Endothelial cell of umbilical vein (primary cell): ENCODE measurements at regions of chr2 and their contacts with region 1.

Region 1: GRCh38 chr2:43024515-43025011 is 201.8 kb downstream of the ZFP36L2 start:
- DNase-seq: peak; percentile 64
- H3K4me3 ChIP-seq: no peak overlapping the region
- H3K27ac ChIP-seq: no peak overlapping the region
- H3K4me1 ChIP-seq: no peaks in the 10 kb centered on the region
- H3K27me3 ChIP-seq: no peaks in the 10 kb centered on the region
- CTCF ChIP-seq: peak; percentile 71 to 94
- POLR2A ChIP-seq: no peak

Region 2: GRCh38 chr2:42810121-42810970 is 214.2 kb before region 1 on chr2:
- CTCF ChIA-PET with region 1: no interaction called
- POLR2A ChIA-PET with region 1: no interaction called
- dilution Hi-C with region 1: no loop called
- intact Hi-C with region 1: no loop called
- DNase-seq: peak; percentile 98
- H3K4me3 ChIP-seq: peak overlapping the region; percentile 9 to 44 (median 35)
- H3K27ac ChIP-seq: peak overlapping the region; percentile 85
- H3K4me1 ChIP-seq: peaks cover 11% of the 10 kb centered on the region
- H3K27me3 ChIP-seq: peaks cover 0 to under 1% of the 10 kb centered on the region in 2 experiments
- CTCF ChIP-seq: no peak
- POLR2A ChIP-seq: peak; percentile 91

Region 3: GRCh38 chr2:42859006-42859552 is 165.5 kb before region 1 on chr2:
- CTCF ChIA-PET with region 1: interaction called, 8 read pairs
- POLR2A ChIA-PET with region 1: no interaction called
- dilution Hi-C with region 1: no loop called
- intact Hi-C with region 1: loop called (anchors 1 kb)
- DNase-seq: peak; percentile 90
- H3K4me3 ChIP-seq: no peak overlapping the region
- H3K27ac ChIP-seq: no peak overlapping the region
- H3K4me1 ChIP-seq: peaks cover 19% of the 10 kb centered on the region
- H3K27me3 ChIP-seq: no peaks in the 10 kb centered on the region
- CTCF ChIP-seq: peak; percentile 75 to 78
- POLR2A ChIP-seq: no peak

Region 4: DNA sequence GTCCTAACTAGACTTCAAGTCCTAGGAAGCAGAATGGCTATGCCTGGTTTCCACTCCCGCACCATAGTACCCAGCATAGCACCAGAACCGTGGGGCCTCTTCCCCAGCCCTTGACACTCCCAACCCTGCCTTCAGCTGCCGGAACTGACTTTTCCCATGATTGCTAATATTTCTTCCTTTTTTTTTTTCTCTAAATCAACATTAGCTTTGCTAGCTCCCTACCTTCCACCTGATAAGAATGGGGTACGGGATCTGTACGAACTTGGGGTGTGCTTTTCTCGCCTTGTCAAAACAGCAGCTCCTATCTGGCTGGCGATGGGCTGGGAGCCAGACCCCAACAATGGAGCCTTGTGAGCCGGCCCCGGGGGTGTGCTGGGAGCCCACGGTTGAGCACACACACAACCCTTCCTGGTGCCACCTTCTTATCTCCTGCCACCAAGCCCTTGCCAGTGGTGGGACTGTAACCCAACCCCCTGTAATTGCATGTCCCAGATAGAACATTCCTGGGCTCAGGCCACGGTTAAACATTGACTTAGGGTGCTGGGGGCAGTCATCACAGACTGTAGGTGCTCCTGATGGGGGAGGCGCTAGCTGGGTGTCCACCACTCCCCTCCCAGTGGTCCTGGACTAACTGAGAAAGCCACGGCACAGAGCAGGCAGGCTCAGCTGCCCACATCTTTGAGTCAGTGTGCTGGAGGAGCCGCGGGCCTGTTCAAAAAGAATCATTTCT is 19.2 kb before region 1 on chr2:
- CTCF ChIA-PET with region 1: interaction called, 16 read pairs
- POLR2A ChIA-PET with region 1: no interaction called
- dilution Hi-C with region 1: no loop called
- intact Hi-C with region 1: no loop called
- DNase-seq: no peak
- H3K4me3 ChIP-seq: no peak overlapping the region
- H3K27ac ChIP-seq: no peak overlapping the region
- H3K4me1 ChIP-seq: no peaks in the 10 kb centered on the region
- H3K27me3 ChIP-seq: no peaks in the 10 kb centered on the region
- CTCF ChIP-seq: no peak
- POLR2A ChIP-seq: no peak

Region 5: GRCh38 chr2:43086451-43087221 is 62.1 kb after region 1 on chr2:
- CTCF ChIA-PET with region 1: interaction called, 13 read pairs
- POLR2A ChIA-PET with region 1: no interaction called
- dilution Hi-C with region 1: no loop called
- intact Hi-C with region 1: loop called (anchors 1 kb)
- DNase-seq: peak; percentile 96
- H3K4me3 ChIP-seq: no peak overlapping the region
- H3K27ac ChIP-seq: peak overlapping the region; percentile 87
- H3K4me1 ChIP-seq: peaks cover 44% of the 10 kb centered on the region
- H3K27me3 ChIP-seq: no peaks in the 10 kb centered on the region
- CTCF ChIP-seq: no peak
- POLR2A ChIP-seq: peak; percentile 17

Region 6: GRCh38 chr2:43158259-43158880 is 133.8 kb after region 1 on chr2:
- CTCF ChIA-PET with region 1: interaction called, 7 read pairs
- POLR2A ChIA-PET with region 1: no interaction called
- dilution Hi-C with region 1: no loop called
- intact Hi-C with region 1: loop called (anchors 1 kb)
- DNase-seq: peak; percentile 87
- H3K4me3 ChIP-seq: no peak overlapping the region
- H3K27ac ChIP-seq: peak overlapping the region; percentile 23
- H3K4me1 ChIP-seq: peaks cover 13% of the 10 kb centered on the region
- H3K27me3 ChIP-seq: no peaks in the 10 kb centered on the region
- CTCF ChIP-seq: no peak
- POLR2A ChIP-seq: peak; percentile 13

Region 7: DNA sequence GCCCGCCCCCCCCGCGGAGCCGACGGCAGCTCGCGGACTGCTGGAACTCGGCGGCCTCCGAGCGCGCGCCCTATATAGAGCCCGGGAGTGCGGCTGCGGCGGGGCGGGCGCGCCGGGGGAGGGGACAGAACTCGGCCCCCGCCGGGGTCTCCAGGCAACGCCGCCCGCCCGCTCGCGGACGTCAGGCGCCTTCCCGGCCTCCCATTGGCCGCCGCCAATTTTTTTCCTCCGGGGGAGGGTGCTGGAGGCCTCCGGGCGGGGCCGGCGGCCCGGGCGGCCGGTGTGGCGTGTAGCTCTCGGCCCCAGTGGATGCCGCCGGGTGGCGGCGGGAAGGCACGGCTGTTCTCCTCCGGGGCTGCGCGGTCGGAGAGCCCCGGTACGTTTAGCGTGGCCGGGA is 202.0 kb after region 1 on chr2 and contains the start of gene ZFP36L2:
- CTCF ChIA-PET with region 1: interaction called, 52 read pairs
- POLR2A ChIA-PET with region 1: interaction called, 4 read pairs
- dilution Hi-C with region 1: no loop called
- intact Hi-C with region 1: loop called (anchors 1 kb)
- DNase-seq: peak; percentile 91
- H3K4me3 ChIP-seq: peak within 1 kb of the TSS; percentile 71 to 93 (median 90)
- H3K27ac ChIP-seq: peak within 1 kb of the TSS; percentile 88
- H3K4me1 ChIP-seq: peaks cover 31% of the 10 kb centered on the region
- H3K27me3 ChIP-seq: no peaks in the 10 kb centered on the region
- CTCF ChIP-seq: no peak
- POLR2A ChIP-seq: peak; percentile 99
- total RNA-seq, gene ZFP36L2: 73.4 and 75.9 TPM in 2 replicates

Region 8: DNA sequence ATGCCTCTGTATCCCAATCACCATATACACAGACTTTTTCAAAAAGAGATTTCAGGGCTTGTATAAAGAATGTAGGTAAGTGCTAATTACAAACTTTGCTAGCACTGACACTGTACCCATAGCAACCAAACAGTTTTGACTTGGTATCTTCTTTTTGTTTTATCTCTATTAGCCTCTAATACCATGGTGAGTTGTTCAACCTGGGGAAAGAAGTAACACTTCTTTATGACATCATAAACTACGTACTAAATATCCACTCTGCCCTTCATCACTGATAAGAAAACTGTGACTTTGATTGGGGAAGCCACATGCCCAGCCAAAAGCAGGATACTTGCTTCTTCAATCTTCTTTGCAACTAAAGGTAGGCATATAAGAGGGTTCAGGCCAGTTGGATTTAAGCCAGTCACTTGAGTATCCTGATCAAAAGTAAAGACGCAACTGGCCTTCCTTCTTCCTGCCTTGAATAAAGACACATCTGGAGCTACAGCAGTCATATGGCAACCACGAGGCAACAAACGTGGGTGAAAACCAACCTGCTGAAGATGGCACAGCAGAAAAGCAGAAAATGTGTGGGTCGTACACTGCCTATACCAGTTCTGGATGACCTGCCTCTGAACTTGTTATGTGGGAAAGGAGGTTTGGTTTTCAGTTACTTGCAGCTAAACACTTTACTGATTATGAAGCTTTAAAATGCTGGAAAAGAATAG is 554.9 kb after region 1 on chr2:
- CTCF ChIA-PET with region 1: no interaction called
- POLR2A ChIA-PET with region 1: no interaction called
- dilution Hi-C with region 1: no loop called
- intact Hi-C with region 1: no loop called
- DNase-seq: no peak
- H3K4me3 ChIP-seq: no peak overlapping the region
- H3K27ac ChIP-seq: no peak overlapping the region
- H3K4me1 ChIP-seq: no peaks in the 10 kb centered on the region
- H3K27me3 ChIP-seq: no peaks in the 10 kb centered on the region
- CTCF ChIP-seq: no peak
- POLR2A ChIP-seq: no peak